WTC11 (cell line): ENCODE measurements at regions of chr11 and their contacts with region 1.

Region 1: DNA sequence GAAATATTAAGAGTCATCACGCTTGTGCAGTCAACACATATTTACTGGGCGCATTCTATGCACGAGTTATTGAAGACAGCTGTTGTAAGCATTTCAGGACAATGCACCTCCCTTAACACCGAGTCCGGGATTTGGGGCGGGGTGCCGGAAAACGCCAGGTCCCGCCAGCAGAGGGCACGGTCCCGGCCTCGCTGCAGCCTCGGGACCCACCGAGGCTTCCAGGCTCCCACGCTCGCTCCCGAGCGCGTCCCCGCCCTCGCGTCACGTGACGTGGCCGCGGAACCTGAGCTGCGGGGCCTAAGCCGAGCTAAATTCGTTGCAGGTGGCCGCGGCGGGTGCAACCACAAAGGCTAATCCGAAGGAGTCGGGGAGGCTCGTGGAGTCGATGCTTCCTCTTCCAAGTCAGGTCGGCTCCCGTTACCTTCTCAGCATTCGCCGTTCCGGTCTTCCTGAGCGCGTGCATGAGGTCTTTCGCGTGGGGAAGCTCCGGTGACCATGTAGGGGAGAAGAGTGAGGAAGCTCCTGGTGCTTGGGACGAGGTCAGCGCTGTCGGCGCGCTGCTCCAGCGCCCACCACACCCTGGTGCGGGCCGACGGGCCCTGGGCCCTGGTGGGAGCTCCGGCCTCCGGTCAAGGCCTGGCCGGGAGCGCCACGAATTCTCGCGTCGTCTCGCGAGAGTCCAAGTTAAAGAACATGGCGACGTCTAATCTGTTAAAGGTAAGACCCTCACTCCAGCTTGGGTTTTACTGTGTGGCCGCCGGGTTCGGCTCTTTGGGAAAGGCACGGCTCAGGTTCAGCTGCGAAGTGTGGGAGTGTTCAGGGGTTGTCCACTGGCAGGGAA is at the start of gene CUL5:
- DNase-seq: peak; percentile 92
- ATAC-seq: peak; percentile 92
- H3K4me3 Mint-ChIP-seq: peak within 1 kb of the TSS; percentile 99
- H3K27ac Mint-ChIP-seq: peak within 1 kb of the TSS; percentile 98
- H3K4me1 Mint-ChIP-seq: peaks cover 13% of the 10 kb centered on the region
- H3K27me3 Mint-ChIP-seq: no peaks in the 10 kb centered on the region
- CTCF ChIP-seq: peak; percentile 88
- total RNA-seq, gene CUL5: 30.0 to 31.4 TPM (median 30.4 TPM) in 3 replicates

Region 2: GRCh38 chr11:107991868-107992414 is 16.9 kb before region 1 on chr11:
- CTCF ChIA-PET with region 1: interaction called, 19 read pairs
- POLR2A ChIA-PET with region 1: interaction called, 3 read pairs
- DNase-seq: no peak
- ATAC-seq: peak; percentile 91
- H3K4me3 Mint-ChIP-seq: no peak overlapping the region
- H3K27ac Mint-ChIP-seq: peak overlapping the region; percentile 28; the same call in 1 of the 2 replicates
- H3K4me1 Mint-ChIP-seq: peaks cover 17% of the 10 kb centered on the region
- H3K27me3 Mint-ChIP-seq: no peaks in the 10 kb centered on the region
- CTCF ChIP-seq: no peak

Region 3: GRCh38 chr11:108025387-108026080 is 16.7 kb after region 1 on chr11:
- CTCF ChIA-PET with region 1: interaction called, 26 read pairs
- POLR2A ChIA-PET with region 1: interaction called, 3 read pairs
- DNase-seq: no peak
- ATAC-seq: peak; percentile 26; the same call in 1 of the 2 replicates
- H3K4me3 Mint-ChIP-seq: no peak overlapping the region
- H3K27ac Mint-ChIP-seq: peak overlapping the region; percentile 73
- H3K4me1 Mint-ChIP-seq: peaks cover 9% of the 10 kb centered on the region; the same call in 1 of the 2 replicates
- H3K27me3 Mint-ChIP-seq: no peaks in the 10 kb centered on the region
- CTCF ChIP-seq: no peak